Naive thymus-derived CD4-positive, alpha-beta T cell (primary cell): ENCODE measurements at regions of chr7 and their contacts with region 1.

Region 1: DNA sequence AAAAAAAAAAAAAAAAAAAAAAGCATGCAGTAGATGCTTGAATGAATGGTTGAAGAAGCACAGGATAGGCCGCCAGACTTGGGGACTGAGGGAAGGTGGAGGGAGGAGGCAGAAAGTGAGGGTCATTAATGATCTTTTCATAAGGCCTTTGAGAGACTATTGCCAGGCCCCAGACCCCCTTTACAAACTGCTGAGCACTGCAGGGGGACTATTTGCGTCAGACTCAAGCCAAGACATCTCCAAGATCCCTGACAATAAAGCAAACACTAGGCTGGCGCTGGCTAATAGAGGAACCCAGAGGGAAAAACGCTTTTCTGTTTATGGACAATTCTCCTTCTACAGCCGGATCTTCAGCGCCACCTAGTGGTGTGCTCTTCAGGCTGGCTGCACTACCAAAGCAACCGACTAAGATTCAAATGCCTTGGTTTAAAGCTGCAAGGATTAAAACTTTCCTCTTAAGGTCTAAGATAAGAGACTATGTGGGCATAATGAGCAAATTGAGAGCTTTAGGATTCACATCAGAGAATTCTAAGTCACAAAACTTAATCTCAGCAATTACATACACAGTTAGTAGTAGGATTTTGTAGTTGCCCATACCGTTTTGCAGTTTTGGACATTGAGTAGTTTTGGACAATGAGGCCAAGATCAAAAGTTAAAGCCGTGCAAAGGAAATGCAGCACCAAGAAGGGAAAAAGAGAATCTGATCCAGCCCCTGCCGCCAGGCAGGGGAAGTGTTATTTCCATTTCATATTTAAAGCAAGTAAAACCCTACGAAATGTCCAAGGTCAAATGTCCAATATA is 17.9 kb upstream of the AGK start:
- DNase-seq: peak; percentile 10 to 60 (median 46)
- ATAC-seq: peak; percentile 83
- H3K4me3 ChIP-seq: no peak overlapping the region
- H3K4me3 Mint-ChIP-seq: no peak overlapping the region
- H3K27ac ChIP-seq: no peak overlapping the region
- H3K27ac Mint-ChIP-seq: peak overlapping the region in 1 of 9 donors; percentile 70
- H3K4me1 ChIP-seq: no peaks in the 10 kb centered on the region
- H3K4me1 Mint-ChIP-seq: peaks cover 0 to 4% (median 0%) of the 10 kb centered on the region in 7 donors
- H3K27me3 ChIP-seq: peaks cover 0 to 5% of the 10 kb centered on the region in 2 donors
- H3K27me3 Mint-ChIP-seq: peaks cover 32 to 40% (median 34%) of the 10 kb centered on the region in 5 donors

Region 2: GRCh38 chr7:140517546-140518369 is 1015.6 kb before region 1 on chr7:
- CTCF ChIA-PET with region 1: no interaction called
- POLR2A ChIA-PET with region 1: no interaction called
- intact Hi-C with region 1: loop called in 1 of 2 experiments (anchors 1 kb)
- DNase-seq: peak; percentile 36 to 69 (median 45)
- ATAC-seq: peak; percentile 74
- H3K4me3 ChIP-seq: no peak overlapping the region
- H3K4me3 Mint-ChIP-seq: peak overlapping the region in 4 of 10 donors; percentile 23 to 65 (median 41)
- H3K27ac ChIP-seq: no peak overlapping the region
- H3K27ac Mint-ChIP-seq: peak overlapping the region in 1 of 9 donors; percentile 65
- H3K4me1 ChIP-seq: no peaks in the 10 kb centered on the region
- H3K4me1 Mint-ChIP-seq: peaks cover 0 to 7% (median 3%) of the 10 kb centered on the region in 7 donors
- H3K27me3 ChIP-seq: peaks cover 0 to 2% of the 10 kb centered on the region in 2 donors
- H3K27me3 Mint-ChIP-seq: peaks cover 0 to 11% (median 6%) of the 10 kb centered on the region in 5 donors

Region 3: DNA sequence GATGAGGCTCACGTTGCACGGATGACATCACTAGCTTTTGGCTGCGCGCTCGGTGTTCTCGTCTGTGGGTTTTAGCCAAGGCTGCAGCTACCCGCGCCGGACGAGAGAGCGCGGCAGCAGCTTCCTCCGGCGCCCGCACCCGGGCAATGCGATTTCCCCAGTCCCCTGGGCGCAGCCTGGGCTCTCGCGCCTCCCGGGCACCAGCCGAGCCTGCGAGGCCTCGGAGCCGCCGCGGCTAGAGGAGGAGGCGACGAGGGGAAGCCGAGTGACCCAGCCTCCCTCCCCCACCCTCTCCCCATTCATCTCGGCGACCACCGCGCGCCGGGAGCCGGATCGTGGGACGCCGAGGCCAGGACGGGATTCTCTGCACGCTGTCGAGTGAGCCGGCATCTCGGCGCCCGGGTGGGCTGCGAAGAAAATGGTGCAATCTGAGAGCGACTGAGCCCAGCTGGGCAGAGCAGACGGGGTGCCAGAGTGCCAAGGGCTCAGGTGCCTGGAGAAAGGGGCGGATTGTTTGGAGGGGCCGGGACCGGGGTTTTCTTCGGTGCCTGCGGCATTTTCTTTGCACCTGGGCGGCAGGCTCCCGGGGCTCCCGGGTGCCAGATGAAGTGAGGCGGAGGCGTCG is 460.7 kb before region 1 on chr7:
- CTCF ChIA-PET with region 1: no interaction called
- POLR2A ChIA-PET with region 1: no interaction called
- intact Hi-C with region 1: loop called (anchors 1 to 2 kb)
- DNase-seq: peak in 5 of 9 donors; percentile 2 to 39 (median 5)
- ATAC-seq: peak; percentile 45
- H3K4me3 ChIP-seq: peak overlapping the region; percentile 42
- H3K4me3 Mint-ChIP-seq: peak overlapping the region; percentile 74 to 92 (median 86)
- H3K27ac ChIP-seq: no peak overlapping the region
- H3K27ac Mint-ChIP-seq: no peak overlapping the region
- H3K4me1 ChIP-seq: peaks cover 5 to 6% of the 10 kb centered on the region in 2 donors
- H3K4me1 Mint-ChIP-seq: peaks cover 17 to 30% (median 28%) of the 10 kb centered on the region in 7 donors
- H3K27me3 ChIP-seq: peaks cover 4 to 31% of the 10 kb centered on the region in 2 donors
- H3K27me3 Mint-ChIP-seq: peaks cover 42 to 49% (median 48%) of the 10 kb centered on the region in 5 donors

Region 4: DNA sequence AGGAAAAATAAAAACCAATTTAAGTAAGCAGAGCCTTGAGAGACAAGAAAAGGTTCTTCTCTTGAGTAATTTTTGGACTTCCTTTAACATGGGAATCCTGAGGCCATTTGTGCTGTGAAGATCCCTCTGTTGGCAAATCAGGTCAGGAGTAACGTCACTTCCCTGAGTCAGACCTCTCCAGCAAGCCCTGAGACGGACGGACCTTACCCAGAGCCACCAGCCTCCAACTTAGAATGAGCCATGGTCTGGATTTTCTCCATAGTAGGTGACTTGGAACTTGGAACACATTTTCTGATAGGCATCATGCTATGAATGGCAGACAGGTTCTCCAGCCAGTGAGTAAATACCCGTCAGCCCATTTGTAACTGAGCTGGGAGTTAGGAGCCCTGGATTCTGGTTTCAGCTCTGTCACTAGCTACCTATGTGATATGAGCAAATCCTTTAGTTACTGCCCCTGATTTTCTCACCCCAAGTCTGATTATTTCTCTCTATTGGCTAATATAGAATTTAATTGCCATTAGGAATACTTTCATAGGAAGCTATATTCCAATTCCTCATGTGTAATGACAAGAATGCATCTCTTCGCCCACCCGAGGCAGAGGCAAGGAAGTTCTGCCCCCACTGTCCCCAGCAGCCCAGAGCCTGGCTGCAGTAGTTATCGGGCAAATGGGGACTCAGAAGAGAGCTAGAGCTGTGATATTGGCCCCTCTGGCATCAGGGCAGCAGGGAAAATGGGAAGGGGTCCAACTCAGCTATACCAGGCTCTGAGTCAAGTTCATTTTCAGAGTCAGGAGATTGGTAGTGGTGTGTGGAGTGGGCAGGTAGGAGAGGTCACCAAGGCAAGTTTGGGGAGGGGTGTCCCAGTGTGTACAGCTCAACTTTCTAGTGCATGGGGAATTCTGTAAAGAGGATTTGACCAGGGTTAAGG is 135.8 kb before region 1 on chr7:
- CTCF ChIA-PET with region 1: no interaction called
- POLR2A ChIA-PET with region 1: no interaction called
- intact Hi-C with region 1: no loop called
- DNase-seq: no peak
- ATAC-seq: no peak
- H3K4me3 ChIP-seq: no peak overlapping the region
- H3K4me3 Mint-ChIP-seq: no peak overlapping the region
- H3K27ac ChIP-seq: no peak overlapping the region
- H3K27ac Mint-ChIP-seq: no peak overlapping the region
- H3K4me1 ChIP-seq: no peaks in the 10 kb centered on the region
- H3K4me1 Mint-ChIP-seq: no peaks in the 10 kb centered on the region
- H3K27me3 ChIP-seq: no peaks in the 10 kb centered on the region
- H3K27me3 Mint-ChIP-seq: peaks cover 14 to 44% (median 21%) of the 10 kb centered on the region in 5 donors